PC-3 (cell line): ENCODE measurements at regions of chr15 and their contacts with region 1.

Region 1: DNA sequence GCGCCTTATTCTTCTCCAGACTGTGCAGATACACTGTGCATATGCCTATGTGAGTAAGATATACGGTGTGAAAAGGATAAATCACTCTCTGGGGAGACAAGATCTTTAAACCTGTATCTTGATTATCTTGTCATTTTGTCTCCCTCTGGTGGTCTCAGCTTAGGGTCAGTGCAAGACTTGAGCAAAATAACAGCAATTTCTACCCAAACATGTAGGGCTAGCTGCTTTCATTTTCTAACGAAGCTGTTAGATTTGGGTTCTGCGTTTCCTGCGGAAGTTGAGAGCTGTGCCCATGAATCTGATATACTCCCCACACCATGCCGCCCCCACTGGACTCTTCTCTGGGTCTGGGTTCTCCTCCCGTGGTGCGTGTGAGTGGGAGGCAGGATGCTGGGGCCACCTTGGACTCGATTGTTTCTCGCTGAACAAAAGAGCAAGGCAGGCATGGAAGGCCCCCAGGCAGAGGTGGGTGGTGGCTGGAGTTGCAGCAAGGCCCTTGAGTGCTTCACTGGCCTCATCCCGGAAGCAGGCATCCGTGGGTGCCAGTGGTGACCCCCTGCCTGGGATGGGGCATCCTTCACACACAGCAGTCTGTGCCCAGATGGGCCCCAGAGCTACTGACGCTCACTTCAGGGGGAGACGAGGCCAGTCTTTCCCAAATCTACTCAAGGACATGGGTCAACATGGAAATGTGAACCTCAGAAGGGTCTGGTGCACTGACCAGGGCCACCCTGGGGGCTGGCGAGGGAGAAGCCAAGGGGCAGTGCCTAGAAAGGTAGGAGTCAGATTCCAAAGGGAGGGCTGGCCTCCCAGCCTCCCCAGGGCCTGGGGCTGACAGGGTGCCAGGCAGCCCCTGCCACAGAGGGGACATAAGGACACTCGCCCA is 179.6 kb downstream of the NSMCE3 start:
- DNase-seq: no peak
- ATAC-seq: no peak; the same call in 1 of the 2 replicates
- H3K4me3 ChIP-seq: no peak overlapping the region
- H3K27ac ChIP-seq: no peak overlapping the region
- H3K4me1 ChIP-seq: no peaks in the 10 kb centered on the region
- H3K27me3 ChIP-seq: no peaks in the 10 kb centered on the region
- CTCF ChIP-seq: no peak

Region 2: GRCh38 chr15:28881170-28881569 is 208.8 kb before region 1 on chr15:
- CTCF ChIA-PET with region 1: no interaction called
- POLR2A ChIA-PET with region 1: no interaction called
- intact Hi-C with region 1: loop called (anchors 5 kb)
- DNase-seq: peak; percentile 26
- ATAC-seq: peak; percentile 55
- H3K4me3 ChIP-seq: no peak overlapping the region
- H3K27ac ChIP-seq: no peak overlapping the region
- H3K4me1 ChIP-seq: peaks cover 6% of the 10 kb centered on the region
- H3K27me3 ChIP-seq: no peaks in the 10 kb centered on the region
- CTCF ChIP-seq: 0 out of 2 replicates have a peak, but pooled peaks have one; percentile 31

Region 3: GRCh38 chr15:28975766-28976179 is 114.2 kb before region 1 on chr15:
- CTCF ChIA-PET with region 1: no interaction called
- POLR2A ChIA-PET with region 1: no interaction called
- intact Hi-C with region 1: no loop called
- DNase-seq: peak; percentile 80
- ATAC-seq: peak; percentile 50
- H3K4me3 ChIP-seq: no peak overlapping the region
- H3K27ac ChIP-seq: no peak overlapping the region
- H3K4me1 ChIP-seq: peaks cover 14% of the 10 kb centered on the region
- H3K27me3 ChIP-seq: no peaks in the 10 kb centered on the region
- CTCF ChIP-seq: peak; percentile 96

Region 4: DNA sequence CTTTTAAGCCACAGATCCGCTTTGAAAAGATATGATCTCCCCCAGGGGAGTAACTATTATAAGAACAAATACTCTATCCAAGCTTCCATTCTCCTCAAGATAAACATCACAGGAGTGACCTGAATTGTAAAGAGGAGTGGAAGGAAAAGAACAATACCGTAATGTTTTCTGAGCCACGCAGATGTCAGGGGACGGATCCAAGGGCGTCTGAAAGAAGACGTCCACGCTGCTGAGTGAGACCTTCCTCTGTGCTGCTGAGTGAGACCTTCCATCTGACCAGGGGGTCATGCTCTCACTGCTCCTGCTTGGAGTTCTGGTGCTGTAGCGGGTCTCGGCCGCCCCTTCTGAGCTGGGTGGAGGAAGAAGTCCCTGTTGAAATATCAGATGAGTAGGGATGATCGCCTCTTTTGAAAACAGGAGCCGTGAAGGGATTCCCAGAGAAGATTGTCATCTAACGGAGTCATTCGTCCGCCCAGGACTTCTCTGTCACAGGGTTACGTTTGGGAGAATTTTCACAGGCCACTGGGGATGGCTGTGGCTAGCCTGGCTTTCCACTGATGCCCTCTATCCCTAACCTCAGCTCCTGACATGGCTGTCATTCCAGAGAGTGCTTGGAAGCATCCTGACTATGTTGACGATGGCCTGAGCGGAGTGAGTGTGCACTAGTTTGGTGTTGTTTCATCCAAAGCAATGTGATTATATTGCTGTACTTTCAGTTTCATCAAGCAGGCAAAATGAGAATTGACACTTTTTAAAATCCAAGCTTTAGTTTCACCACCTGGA is 19.3 kb before region 1 on chr15:
- CTCF ChIA-PET with region 1: no interaction called
- POLR2A ChIA-PET with region 1: no interaction called
- intact Hi-C with region 1: no loop called
- DNase-seq: no peak
- ATAC-seq: no peak
- H3K4me3 ChIP-seq: no peak overlapping the region
- H3K27ac ChIP-seq: no peak overlapping the region
- H3K4me1 ChIP-seq: peaks cover 9% of the 10 kb centered on the region; the same call in 1 of the 2 replicates
- H3K27me3 ChIP-seq: no peaks in the 10 kb centered on the region
- CTCF ChIP-seq: no peak

Region 5: GRCh38 chr15:29139540-29140459 is 49.8 kb after region 1 on chr15:
- CTCF ChIA-PET with region 1: no interaction called
- POLR2A ChIA-PET with region 1: no interaction called
- intact Hi-C with region 1: no loop called
- DNase-seq: peak; percentile 67
- ATAC-seq: peak; percentile 94
- H3K4me3 ChIP-seq: no peak overlapping the region
- H3K27ac ChIP-seq: no peak overlapping the region
- H3K4me1 ChIP-seq: peaks cover 8% of the 10 kb centered on the region; the same call in 1 of the 2 replicates
- H3K27me3 ChIP-seq: no peaks in the 10 kb centered on the region
- CTCF ChIP-seq: peak; percentile 90

Region 6: GRCh38 chr15:29196290-29196689 is 106.3 kb after region 1 on chr15:
- CTCF ChIA-PET with region 1: no interaction called
- POLR2A ChIA-PET with region 1: no interaction called
- intact Hi-C with region 1: no loop called
- DNase-seq: no peak
- ATAC-seq: no peak
- H3K4me3 ChIP-seq: no peak overlapping the region
- H3K27ac ChIP-seq: no peak overlapping the region
- H3K4me1 ChIP-seq: no peaks in the 10 kb centered on the region
- H3K27me3 ChIP-seq: peaks cover 67% of the 10 kb centered on the region
- CTCF ChIP-seq: no peak